AG04449 (cell line): ENCODE measurements at regions of chr7 and their contacts with region 1.

Region 1: DNA sequence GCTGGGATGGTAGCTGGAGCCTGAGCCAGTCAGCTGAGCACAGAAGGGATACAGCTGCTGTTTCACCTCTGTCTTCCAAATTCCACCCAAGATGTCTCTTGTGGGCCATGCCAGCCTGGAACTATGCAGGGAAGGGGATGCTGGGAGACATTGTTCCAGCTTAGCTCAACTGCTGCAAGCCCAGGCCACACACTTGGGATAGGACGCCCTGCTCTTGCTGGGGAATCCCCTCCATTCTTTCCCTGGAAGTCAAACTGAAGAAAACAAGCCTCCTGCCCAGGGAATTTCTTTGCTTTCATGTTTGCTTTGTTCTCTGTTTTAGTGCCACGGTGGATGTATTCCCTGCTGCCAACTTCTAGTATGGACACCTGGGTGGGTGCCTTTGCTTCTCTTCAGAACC is 55.2 kb upstream of the CDK13 start:
- DNase-seq: no peak
- H3K4me3 ChIP-seq: no peak overlapping the region
- CTCF ChIP-seq: no peak

Region 2: GRCh38 chr7:39910108-39910869 is 15.4 kb after region 1 on chr7:
- CTCF ChIA-PET with region 1: interaction called, 26 read pairs
- POLR2A ChIA-PET with region 1: no interaction called
- DNase-seq: peak; percentile 26
- H3K4me3 ChIP-seq: no peak overlapping the region
- CTCF ChIP-seq: no peak

Region 3: DNA sequence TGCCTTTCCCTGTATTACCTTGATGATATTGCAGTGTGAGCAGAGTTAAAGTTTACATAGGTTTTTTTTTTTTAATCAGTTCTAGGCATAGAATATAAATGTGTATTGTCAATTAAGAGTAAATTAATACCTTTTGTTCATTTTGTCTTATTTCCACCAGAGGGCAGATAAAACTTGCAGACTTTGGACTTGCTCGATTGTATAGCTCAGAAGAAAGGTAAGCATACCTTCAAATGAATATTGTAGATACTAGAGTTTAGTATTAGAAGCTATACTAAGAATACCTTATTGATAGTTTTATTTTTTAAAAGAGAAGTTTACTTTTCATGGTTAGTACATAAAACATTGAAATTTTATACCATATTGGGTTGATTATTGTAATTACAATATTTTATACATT is 152.8 kb after region 1 on chr7:
- CTCF ChIA-PET with region 1: interaction called, 197 read pairs
- POLR2A ChIA-PET with region 1: no interaction called
- DNase-seq: no peak
- H3K4me3 ChIP-seq: no peak overlapping the region
- CTCF ChIP-seq: no peak

Region 4: GRCh38 chr7:40211276-40212003 is 316.5 kb after region 1 on chr7:
- CTCF ChIA-PET with region 1: no interaction called
- POLR2A ChIA-PET with region 1: no interaction called
- DNase-seq: no peak
- H3K4me3 ChIP-seq: no peak overlapping the region
- CTCF ChIP-seq: no peak